RWPE1 (cell line): ENCODE measurements at regions of chr19 and their contacts with region 1.

Region 1: DNA sequence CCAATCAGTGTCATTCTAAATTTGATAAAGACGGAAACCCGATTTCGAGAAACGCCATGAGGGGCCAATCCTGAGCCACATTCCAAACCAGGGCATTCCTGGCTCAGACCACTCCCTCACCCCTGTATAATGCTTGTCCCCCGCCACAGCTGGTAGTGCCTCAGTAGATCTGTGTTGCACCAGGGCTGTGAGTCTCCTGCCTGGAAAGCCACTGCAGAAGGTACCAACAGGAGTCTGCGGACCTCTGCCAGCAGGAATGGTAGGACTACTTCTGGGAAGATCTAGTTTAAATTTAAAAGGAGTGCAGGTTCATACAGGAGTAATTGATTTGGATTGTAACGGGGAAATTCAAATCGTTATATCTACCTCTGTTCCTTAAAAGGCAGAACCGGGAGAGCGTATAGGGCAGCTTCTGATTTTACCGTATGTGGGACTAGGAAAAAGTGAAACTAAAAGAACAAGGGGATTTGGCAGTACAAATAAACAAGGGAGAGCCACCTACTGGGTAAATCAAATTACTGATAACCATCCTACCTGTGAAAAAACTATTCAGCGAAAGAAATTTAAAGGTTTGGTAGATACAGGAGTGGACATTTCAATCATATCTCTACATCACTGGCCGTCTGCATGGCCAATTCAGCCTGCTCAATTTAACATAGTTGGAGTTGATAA is 20.8 kb upstream of the ZNF266 start:
- DNase-seq: no peak
- H3K27ac ChIP-seq: no peak overlapping the region
- CTCF ChIP-seq: no peak

Region 2: GRCh38 chr19:9353011-9353410 is 103.1 kb before region 1 on chr19:
- CTCF ChIA-PET with region 1: interaction called, 10 read pairs
- POLR2A ChIA-PET with region 1: no interaction called
- DNase-seq: no peak
- H3K27ac ChIP-seq: no peak overlapping the region
- CTCF ChIP-seq: no peak

Region 3: DNA sequence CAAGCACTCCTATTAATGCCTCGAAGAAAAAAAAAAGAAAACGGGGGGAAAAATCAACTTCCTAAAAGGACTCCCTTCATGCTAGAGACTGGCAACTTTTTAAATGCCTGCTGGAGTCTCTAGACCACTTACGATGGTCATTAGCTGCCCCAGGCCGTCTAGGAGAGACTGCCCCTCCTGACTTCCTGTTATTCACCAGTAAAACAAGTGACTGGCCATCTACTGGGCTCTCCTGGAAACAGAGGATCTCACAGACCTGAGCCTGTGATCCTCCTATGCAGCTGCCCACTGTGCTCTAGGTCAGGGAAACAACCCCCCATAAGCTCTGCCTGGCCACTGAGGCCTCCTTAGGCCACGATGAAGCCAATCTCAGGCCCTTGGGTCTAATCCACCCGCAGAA is 28.2 kb before region 1 on chr19:
- CTCF ChIA-PET with region 1: no interaction called
- POLR2A ChIA-PET with region 1: no interaction called
- DNase-seq: no peak
- H3K27ac ChIP-seq: no peak overlapping the region
- CTCF ChIP-seq: no peak